ENCODE measurements at regions of chr3 and their contacts with region 1.

Region 1: DNA sequence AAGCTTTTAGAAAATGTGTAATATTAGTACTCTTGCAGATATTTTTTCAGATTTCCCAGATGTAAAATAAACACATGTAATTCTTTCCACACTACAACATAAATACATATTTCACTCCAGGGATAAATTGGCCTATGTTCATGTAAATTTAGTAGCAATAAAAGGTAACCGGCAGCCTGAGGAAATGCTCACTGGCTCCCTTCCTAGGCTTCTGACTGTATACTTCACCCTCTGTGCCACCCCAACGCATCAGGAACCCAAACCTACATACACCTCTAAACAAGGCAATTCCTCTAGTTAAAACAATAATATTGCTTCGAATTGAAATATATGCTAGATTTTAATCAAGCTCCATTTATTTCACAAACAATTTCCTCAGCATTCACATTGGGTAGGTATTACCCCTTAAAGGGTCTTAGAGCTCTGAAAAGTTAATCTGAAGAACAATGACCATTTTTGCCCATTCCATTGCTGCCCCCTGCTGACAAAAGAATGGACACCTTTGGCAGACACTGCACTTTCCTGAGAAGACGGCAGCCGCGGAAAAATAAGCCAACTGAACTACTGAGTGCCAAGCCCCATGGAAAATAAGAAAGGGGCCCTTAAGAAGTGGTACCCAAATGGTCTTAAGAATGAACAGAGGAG is 212.5 kb downstream of the OSBPL10 start:
- DNase-seq: peak; percentile 51 to 66
- H3K4me3 ChIP-seq: no peak overlapping the region
- H3K4me3 Mint-ChIP-seq: no peak overlapping the region
- H3K27ac Mint-ChIP-seq: no peak overlapping the region
- H3K4me1 ChIP-seq: no peaks in the 10 kb centered on the region
- H3K4me1 Mint-ChIP-seq: peaks cover 6% of the 10 kb centered on the region
- H3K27me3 ChIP-seq: no peaks in the 10 kb centered on the region
- H3K27me3 Mint-ChIP-seq: no peaks in the 10 kb centered on the region
- CTCF ChIP-seq: peak; percentile 59 to 66

Region 2: DNA sequence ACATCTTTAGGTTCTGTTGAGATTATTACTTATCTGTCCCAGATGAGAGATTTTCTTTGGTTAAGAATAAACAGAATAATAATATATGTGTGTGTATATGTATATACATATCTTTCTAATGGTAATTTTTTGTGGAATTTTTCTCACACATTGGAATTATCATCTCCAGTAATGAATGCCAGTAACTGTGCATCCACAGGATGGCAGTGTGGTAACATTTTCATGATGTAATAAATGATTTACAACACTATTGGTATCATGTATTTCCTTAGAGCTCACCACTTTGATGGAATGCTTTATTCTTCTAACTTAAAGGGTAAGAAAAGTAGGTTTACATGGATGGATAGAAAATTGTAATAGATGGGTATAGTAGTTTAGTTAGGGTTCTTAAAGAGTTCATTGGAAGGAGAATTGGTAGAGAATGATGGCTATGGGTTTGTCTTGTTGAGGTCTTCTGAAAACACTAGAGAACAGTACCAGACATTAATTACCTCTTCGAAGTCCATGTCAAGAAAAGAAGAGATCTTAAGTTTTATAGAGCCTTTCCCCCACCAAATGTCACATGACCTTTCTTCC is 157.8 kb before region 1 on chr3:
- CTCF ChIA-PET with region 1: no interaction called
- POLR2A ChIA-PET with region 1: no interaction called
- intact Hi-C with region 1: loop called (anchors 1 kb)
- DNase-seq: peak in 1 of 2 experiments; percentile 23
- H3K4me3 ChIP-seq: no peak overlapping the region
- H3K4me3 Mint-ChIP-seq: no peak overlapping the region
- H3K27ac Mint-ChIP-seq: no peak overlapping the region
- H3K4me1 ChIP-seq: peaks cover 6% of the 10 kb centered on the region; the same call in 1 of the 2 replicates
- H3K4me1 Mint-ChIP-seq: peaks cover 21% of the 10 kb centered on the region
- H3K27me3 ChIP-seq: no peaks in the 10 kb centered on the region
- H3K27me3 Mint-ChIP-seq: no peaks in the 10 kb centered on the region
- CTCF ChIP-seq: peak; percentile 28 to 44

Region 3: GRCh38 chr3:31724661-31725060 is 43.9 kb before region 1 on chr3:
- CTCF ChIA-PET with region 1: interaction called, 11 read pairs
- POLR2A ChIA-PET with region 1: no interaction called
- intact Hi-C with region 1: loop called (anchors 1 kb)
- DNase-seq: peak in 1 of 2 experiments; percentile 11
- H3K4me3 ChIP-seq: no peak overlapping the region
- H3K4me3 Mint-ChIP-seq: no peak overlapping the region
- H3K27ac Mint-ChIP-seq: no peak overlapping the region
- H3K4me1 ChIP-seq: no peaks in the 10 kb centered on the region; the same call in 1 of the 2 replicates
- H3K4me1 Mint-ChIP-seq: no peaks in the 10 kb centered on the region
- H3K27me3 ChIP-seq: no peaks in the 10 kb centered on the region
- H3K27me3 Mint-ChIP-seq: no peaks in the 10 kb centered on the region
- CTCF ChIP-seq: peak; percentile 28 to 50

Region 4: GRCh38 chr3:31831598-31831997 is 63.0 kb after region 1 on chr3:
- CTCF ChIA-PET with region 1: no interaction called
- POLR2A ChIA-PET with region 1: no interaction called
- intact Hi-C with region 1: no loop called
- DNase-seq: no peak
- H3K4me3 ChIP-seq: no peak overlapping the region
- H3K4me3 Mint-ChIP-seq: no peak overlapping the region
- H3K27ac Mint-ChIP-seq: no peak overlapping the region
- H3K4me1 ChIP-seq: no peaks in the 10 kb centered on the region
- H3K4me1 Mint-ChIP-seq: peaks cover 4% of the 10 kb centered on the region
- H3K27me3 ChIP-seq: no peaks in the 10 kb centered on the region
- H3K27me3 Mint-ChIP-seq: no peaks in the 10 kb centered on the region
- CTCF ChIP-seq: no peak

Measured in Caco-2 (cell line).